Gastrocnemius medialis (tissue), 4 donors: ENCODE measurements at regions of chr6 and their contacts with region 1.

Region 1: DNA sequence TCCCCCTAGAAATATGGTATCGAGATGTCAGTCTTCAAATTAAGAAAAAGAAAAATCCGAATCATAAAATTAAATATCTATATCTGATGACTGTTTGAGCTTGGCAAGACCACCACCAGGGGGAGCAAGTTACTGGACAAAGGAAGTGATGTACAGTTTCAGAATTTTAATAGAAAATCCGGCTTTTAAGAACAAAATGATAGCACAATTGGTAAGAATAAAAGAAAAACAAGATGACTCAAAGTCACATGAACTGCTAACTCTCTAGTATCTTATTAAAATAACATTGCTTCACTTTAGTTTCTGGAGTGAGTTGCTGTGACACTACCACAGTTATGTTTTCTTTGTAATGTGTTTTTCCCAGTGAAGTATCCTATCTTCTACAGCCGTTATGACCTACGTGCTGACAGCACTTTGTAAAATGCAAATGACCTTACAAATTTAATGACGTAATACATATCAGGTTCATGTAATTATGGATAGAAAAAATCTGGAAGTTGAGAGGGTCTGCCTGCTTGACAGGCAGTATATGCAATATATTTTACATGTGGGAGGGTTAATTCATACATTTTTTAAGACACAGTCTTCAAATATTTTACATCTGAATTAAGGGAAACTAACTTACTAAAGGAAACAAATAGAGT is 405.3 kb upstream of the HS3ST5 start:
- DNase-seq: no peak
- ATAC-seq: no peak
- H3K4me3 ChIP-seq: no peak overlapping the region
- H3K27ac ChIP-seq: no peak overlapping the region
- H3K4me1 ChIP-seq: no peaks in the 10 kb centered on the region
- H3K27me3 ChIP-seq: no peaks in the 10 kb centered on the region
- CTCF ChIP-seq: peak in 2 of 5 experiments; percentile 28 to 45
- POLR2A ChIP-seq: no peak

Region 2: GRCh38 chr6:114714836-114715507 is 33.1 kb before region 1 on chr6:
- in situ Hi-C with region 1: no loop called
- intact Hi-C with region 1: no loop called
- DNase-seq: no peak
- ATAC-seq: no peak
- H3K4me3 ChIP-seq: no peak overlapping the region
- H3K27ac ChIP-seq: no peak overlapping the region
- H3K4me1 ChIP-seq: no peaks in the 10 kb centered on the region
- H3K27me3 ChIP-seq: no peaks in the 10 kb centered on the region
- CTCF ChIP-seq: no peak
- POLR2A ChIP-seq: no peak

Region 3: GRCh38 chr6:115896538-115897129 is 1148.5 kb after region 1 on chr6:
- in situ Hi-C with region 1: loop called in 1 of 4 experiments (anchors 10 kb)
- intact Hi-C with region 1: no loop called
- DNase-seq: no peak
- ATAC-seq: no peak
- H3K4me3 ChIP-seq: no peak overlapping the region
- H3K27ac ChIP-seq: no peak overlapping the region
- H3K4me1 ChIP-seq: no peaks in the 10 kb centered on the region
- H3K27me3 ChIP-seq: no peaks in the 10 kb centered on the region
- CTCF ChIP-seq: peak in 2 of 5 experiments; percentile 30 to 46
- POLR2A ChIP-seq: no peak